Heart left ventricle (tissue), 16 donors: ENCODE measurements at regions of chr7 and their contacts with region 1.

Region 1: DNA sequence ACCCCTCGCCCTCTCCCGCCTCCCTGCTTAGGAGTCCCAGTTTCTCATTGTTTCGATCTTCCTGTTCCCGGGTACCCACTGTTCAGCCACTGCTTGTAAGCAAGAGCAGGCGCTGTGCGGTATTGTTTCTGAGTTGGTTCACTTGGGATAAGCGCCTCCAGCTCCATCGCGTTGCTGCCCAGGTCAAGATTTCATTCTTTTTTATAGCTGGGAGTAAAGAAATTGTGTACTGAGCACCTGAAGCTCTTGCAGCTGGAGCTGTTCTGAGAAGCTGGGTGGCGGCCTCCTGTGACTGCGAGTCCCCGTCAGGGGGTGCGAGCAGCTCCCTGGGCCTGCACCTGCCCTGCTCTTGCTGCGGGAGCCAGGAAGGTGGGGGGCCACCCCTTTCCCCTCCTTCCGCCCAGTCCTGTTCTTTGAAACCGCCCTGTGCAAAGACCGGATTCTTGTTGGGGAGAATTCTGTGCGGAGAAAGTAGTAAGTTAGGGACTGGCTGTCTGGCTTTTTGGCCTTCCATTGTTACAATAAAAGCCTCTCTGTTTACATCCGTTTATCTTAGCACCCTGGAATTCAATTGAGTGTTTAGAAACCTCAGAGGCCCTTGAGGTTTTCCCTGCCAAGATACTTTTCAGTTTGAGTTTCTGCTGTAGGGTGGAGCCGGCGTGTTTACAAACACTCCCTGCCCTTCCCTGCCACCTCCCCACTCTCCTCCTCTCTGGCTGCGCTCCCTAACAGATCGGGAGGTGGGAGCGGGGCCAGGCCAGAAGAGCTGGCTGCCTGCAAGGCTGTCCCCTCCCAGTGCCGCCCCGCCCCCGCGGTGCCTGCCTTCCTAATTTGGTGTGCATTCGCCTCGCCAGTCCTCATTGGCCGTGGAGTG is 30.8 kb upstream of the AP5Z1 start:
- DNase-seq: peak; percentile 98 to 100 (median 100)
- ATAC-seq: peak; percentile 93 to 96 (median 94)
- H3K4me3 ChIP-seq: peak overlapping the region in 9 of 12 donors; percentile 29 to 53 (median 39)
- H3K27ac ChIP-seq: peak overlapping the region; percentile 67 to 95 (median 91)
- H3K4me1 ChIP-seq: peaks cover 12 to 69% (median 52%) of the 10 kb centered on the region in 12 donors
- H3K27me3 ChIP-seq: no peaks in the 10 kb centered on the region
- CTCF ChIP-seq: no peak
- POLR2A ChIP-seq: peak in 1 of 2 donors; percentile 21

Region 2: GRCh38 chr7:4631664-4632171 is 112.9 kb before region 1 on chr7:
- intact Hi-C with region 1: loop called in 1 of 10 experiments (anchors 5 kb)
- DNase-seq: peak; percentile 66 to 84 (median 79)
- ATAC-seq: peak; percentile 78 to 98 (median 95)
- H3K4me3 ChIP-seq: peak overlapping the region in 9 of 12 donors; percentile 18 to 41 (median 32)
- H3K27ac ChIP-seq: peak overlapping the region in 3 of 12 donors; percentile 43 to 64 (median 44)
- H3K4me1 ChIP-seq: peaks cover 0 to 13% (median 6%) of the 10 kb centered on the region in 12 donors
- H3K27me3 ChIP-seq: no peaks in the 10 kb centered on the region
- CTCF ChIP-seq: peak; percentile 42 to 78 (median 65)
- POLR2A ChIP-seq: no peak

Region 3: GRCh38 chr7:4641667-4642467 is 102.8 kb before region 1 on chr7:
- intact Hi-C with region 1: loop called in 5 of 10 experiments (anchors 2 to 5 kb)
- DNase-seq: peak; percentile 92 to 98 (median 95)
- ATAC-seq: peak; percentile 92 to 98 (median 96)
- H3K4me3 ChIP-seq: peak overlapping the region; percentile 15 to 77 (median 64)
- H3K27ac ChIP-seq: peak overlapping the region; percentile 61 to 93 (median 86)
- H3K4me1 ChIP-seq: peaks cover 0 to 15% (median 9%) of the 10 kb centered on the region in 12 donors
- H3K27me3 ChIP-seq: no peaks in the 10 kb centered on the region
- CTCF ChIP-seq: peak in 11 of 12 donors; percentile 10 to 79 (median 55)
- POLR2A ChIP-seq: peak in 1 of 2 donors; percentile 50

Region 4: DNA sequence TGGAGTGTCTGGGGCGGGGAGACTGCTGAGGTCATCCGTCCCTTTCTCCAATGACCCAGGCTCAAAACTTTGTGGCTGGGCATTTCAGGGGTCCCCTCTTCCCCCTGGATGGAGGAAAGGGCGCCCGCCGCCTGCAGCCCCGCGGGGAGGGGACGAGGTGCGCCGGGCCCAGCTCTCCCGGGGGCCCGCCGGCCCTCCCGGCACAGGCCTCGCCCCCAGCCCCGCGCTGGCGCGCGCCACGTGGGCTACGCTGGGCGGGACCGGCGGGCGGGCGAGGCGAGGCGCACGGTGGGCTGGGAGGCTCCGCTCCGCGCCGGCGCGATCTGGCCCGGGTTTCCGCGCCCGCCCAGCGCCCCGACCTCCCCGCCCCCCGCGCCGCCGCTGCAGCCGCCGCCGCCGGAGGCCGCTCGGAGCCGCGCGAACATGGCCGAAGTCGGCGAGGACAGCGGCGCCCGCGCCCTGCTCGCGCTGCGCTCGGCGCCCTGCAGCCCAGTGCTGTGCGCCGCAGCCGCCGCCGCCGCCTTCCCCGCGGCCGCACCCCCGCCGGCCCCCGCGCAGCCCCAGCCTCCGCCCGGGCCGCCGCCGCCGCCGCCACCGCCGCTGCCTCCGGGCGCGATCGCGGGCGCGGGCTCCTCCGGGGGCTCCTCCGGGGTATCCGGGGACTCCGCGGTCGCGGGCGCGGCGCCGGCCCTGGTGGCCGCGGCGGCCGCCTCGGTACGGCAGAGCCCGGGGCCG is 62.6 kb before region 1 on chr7 and contains the start of gene FOXK1:
- intact Hi-C with region 1: loop called in 6 of 10 experiments (anchors 1 to 5 kb)
- DNase-seq: peak; percentile 76 to 92 (median 86)
- ATAC-seq: peak; percentile 34 to 87 (median 72)
- H3K4me3 ChIP-seq: peak within 1 kb of the TSS; percentile 88 to 99 (median 97)
- H3K27ac ChIP-seq: peak within 1 kb of the TSS; percentile 87 to 99 (median 94)
- H3K4me1 ChIP-seq: peaks cover 4 to 40% (median 21%) of the 10 kb centered on the region in 12 donors
- H3K27me3 ChIP-seq: no peaks in the 10 kb centered on the region
- CTCF ChIP-seq: no peak
- POLR2A ChIP-seq: peak in 1 of 2 donors; percentile 51
- total RNA-seq, gene FOXK1: 12.4 to 43.7 (median 22.5) TPM

Region 5: GRCh38 chr7:4706384-4707216 is 38.0 kb before region 1 on chr7:
- intact Hi-C with region 1: loop called in 1 of 10 experiments (anchors 5 kb)
- DNase-seq: no peak
- ATAC-seq: peak in 3 of 4 donors; percentile 6 to 14 (median 10)
- H3K4me3 ChIP-seq: peak overlapping the region in 7 of 12 donors; percentile 5 to 25 (median 13)
- H3K27ac ChIP-seq: peak overlapping the region in 11 of 12 donors; percentile 33 to 78 (median 61)
- H3K4me1 ChIP-seq: peaks cover 9 to 76% (median 45%) of the 10 kb centered on the region in 12 donors
- H3K27me3 ChIP-seq: no peaks in the 10 kb centered on the region
- CTCF ChIP-seq: no peak
- POLR2A ChIP-seq: no peak

Region 6: DNA sequence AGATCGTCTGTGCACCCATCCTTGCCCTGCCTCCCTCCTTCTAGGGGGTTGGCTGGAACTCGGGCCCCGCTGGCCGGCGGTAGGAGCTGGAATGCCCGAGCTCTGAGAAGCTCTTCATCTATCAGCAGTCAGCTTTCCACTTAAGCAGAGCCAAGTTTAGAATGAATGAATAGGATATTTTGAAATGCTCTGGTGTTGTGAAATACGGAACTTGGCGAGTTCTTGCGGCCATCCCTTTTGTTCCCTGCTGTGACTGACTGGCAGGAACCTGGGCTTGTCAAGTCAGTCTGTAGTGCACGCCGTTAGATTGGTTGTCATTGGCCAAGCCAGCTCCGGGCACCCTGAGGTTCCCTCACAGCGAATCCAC is 29.2 kb before region 1 on chr7:
- intact Hi-C with region 1: loop called in 1 of 10 experiments (anchors 2 kb)
- DNase-seq: peak; percentile 60 to 84 (median 78)
- ATAC-seq: peak; percentile 91 to 94 (median 94)
- H3K4me3 ChIP-seq: peak overlapping the region in 4 of 12 donors; percentile 15 to 28 (median 24)
- H3K27ac ChIP-seq: peak overlapping the region in 7 of 12 donors; percentile 10 to 69 (median 49)
- H3K4me1 ChIP-seq: peaks cover 4 to 67% (median 37%) of the 10 kb centered on the region in 12 donors
- H3K27me3 ChIP-seq: no peaks in the 10 kb centered on the region
- CTCF ChIP-seq: no peak
- POLR2A ChIP-seq: no peak

Region 7: DNA sequence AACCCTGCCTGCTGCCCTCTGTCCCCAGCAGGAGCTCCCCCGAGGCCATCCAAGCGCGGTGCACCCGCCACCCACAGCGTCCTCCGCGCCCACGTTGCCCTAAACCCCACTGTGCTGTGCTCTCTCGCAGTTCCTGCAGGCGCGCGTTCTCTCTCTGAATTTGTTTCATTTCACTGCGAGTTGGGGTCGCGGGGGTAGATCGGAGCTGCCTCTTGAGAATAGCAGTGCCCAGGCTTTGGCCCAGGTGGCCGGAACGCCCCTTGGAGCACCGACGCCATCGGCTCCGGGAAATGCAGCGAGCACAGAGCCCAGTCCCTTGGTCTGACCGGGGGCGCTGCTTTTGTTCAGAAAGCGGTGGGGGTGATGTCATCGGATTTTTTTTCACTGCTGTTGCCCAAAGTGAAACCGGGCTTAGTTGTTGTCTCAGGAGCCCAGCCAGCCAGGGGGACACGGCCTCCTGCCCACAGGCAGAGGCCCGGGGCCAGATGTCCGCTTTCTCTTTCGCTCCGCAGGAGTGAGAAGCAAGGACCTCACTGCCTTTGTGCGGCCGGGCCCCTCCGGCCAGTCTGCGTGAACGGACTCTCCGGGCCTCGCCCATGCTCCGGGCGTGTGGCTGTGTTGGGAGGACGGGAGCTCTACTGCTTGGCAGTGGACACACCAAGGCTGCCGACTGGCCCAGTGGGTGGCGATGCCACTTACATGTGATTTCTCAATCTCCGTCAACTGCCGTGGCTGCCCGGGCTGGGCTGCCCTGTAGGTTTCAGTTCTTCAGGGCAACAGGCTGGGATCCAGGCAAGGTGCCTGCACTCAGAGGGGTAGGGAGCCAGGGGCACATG is 19.4 kb before region 1 on chr7:
- intact Hi-C with region 1: loop called in 2 of 10 experiments (anchors 2 kb)
- DNase-seq: peak; percentile 81 to 87 (median 84)
- ATAC-seq: peak; percentile 71 to 87 (median 82)
- H3K4me3 ChIP-seq: peak overlapping the region; percentile 16 to 69 (median 52)
- H3K27ac ChIP-seq: peak overlapping the region; percentile 79 to 96 (median 90)
- H3K4me1 ChIP-seq: peaks cover 0 to 75% (median 48%) of the 10 kb centered on the region in 12 donors
- H3K27me3 ChIP-seq: no peaks in the 10 kb centered on the region
- CTCF ChIP-seq: peak in 1 of 12 donors; percentile 10
- POLR2A ChIP-seq: peak in 1 of 2 donors; percentile 33